ENCODE measurements at regions of chr7 and their contacts with region 1.

Region 1: GRCh38 chr7:149147072-149147751 is at the start of gene ZNF398:
- DNase-seq: peak; percentile 92 to 94 (median 93)
- H3K4me3 ChIP-seq: peak within 1 kb of the TSS; percentile 78 to 95 (median 88)
- H3K27ac ChIP-seq: peak within 1 kb of the TSS; percentile 78 to 91
- H3K4me1 ChIP-seq: peaks cover 6 to 23% (median 20%) of the 10 kb centered on the region in 4 experiments
- H3K27me3 ChIP-seq: no peaks in the 10 kb centered on the region

Region 2: GRCh38 chr7:148849393-148850098 is 297.7 kb before region 1 on chr7:
- CTCF ChIA-PET with region 1: no interaction called
- POLR2A ChIA-PET with region 1: no interaction called
- DNase-seq: no peak
- H3K4me3 ChIP-seq: no peak overlapping the region
- H3K27ac ChIP-seq: no peak overlapping the region
- H3K4me1 ChIP-seq: peaks cover 17 to 45% (median 26%) of the 10 kb centered on the region in 4 experiments
- H3K27me3 ChIP-seq: no peaks in the 10 kb centered on the region

Region 3: DNA sequence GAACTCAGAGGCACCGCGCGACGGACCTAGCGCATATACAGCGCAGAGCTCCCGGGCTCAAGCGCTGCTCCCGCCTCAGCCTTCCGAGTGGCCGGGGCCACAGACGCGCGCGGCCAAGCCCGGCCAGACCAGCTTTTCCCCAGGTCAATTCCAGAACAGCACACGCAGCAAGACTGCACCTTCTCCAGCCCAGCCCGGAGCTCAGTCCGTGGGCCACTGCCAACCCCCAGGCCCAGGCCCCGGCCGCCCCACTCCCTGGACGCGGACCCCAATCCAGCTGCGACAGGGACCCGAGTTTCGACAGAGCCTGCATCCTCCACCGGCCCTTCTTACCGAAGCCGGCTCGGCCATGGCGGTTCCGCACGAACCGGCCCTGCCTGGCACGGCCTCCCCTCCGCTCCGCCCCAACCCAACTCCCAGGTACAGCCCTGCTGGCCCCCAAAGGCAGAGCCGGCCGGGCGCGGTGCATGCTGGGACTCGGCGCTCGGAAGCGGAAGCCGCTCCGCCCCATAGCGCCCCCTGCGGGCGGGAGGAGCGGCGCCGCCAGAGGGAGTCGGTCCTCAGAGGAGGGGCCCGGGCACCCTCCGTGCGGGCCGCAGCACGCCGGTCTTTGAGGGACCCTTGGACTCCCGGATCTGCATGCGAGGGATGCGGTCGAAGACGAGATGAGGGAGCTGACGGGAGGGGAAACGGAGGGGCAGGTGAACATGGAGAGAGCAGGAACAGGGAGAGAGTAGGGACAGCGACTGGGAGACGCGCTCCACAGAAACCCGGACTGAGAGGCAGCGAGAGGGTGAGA is 21.1 kb before region 1 on chr7 and contains the start of gene ZNF425:
- CTCF ChIA-PET with region 1: interaction called, 44 read pairs
- POLR2A ChIA-PET with region 1: interaction called, 27 read pairs
- DNase-seq: peak; percentile 94 to 96 (median 96)
- H3K4me3 ChIP-seq: peak within 1 kb of the TSS; percentile 86 to 100 (median 92)
- H3K27ac ChIP-seq: peak within 1 kb of the TSS; percentile 88 to 95
- H3K4me1 ChIP-seq: peaks cover 3 to 23% (median 13%) of the 10 kb centered on the region in 4 experiments
- H3K27me3 ChIP-seq: no peaks in the 10 kb centered on the region